Prostate gland (tissue), 2 donors: ENCODE measurements at regions of chr3 and their contacts with region 1.

Region 1: DNA sequence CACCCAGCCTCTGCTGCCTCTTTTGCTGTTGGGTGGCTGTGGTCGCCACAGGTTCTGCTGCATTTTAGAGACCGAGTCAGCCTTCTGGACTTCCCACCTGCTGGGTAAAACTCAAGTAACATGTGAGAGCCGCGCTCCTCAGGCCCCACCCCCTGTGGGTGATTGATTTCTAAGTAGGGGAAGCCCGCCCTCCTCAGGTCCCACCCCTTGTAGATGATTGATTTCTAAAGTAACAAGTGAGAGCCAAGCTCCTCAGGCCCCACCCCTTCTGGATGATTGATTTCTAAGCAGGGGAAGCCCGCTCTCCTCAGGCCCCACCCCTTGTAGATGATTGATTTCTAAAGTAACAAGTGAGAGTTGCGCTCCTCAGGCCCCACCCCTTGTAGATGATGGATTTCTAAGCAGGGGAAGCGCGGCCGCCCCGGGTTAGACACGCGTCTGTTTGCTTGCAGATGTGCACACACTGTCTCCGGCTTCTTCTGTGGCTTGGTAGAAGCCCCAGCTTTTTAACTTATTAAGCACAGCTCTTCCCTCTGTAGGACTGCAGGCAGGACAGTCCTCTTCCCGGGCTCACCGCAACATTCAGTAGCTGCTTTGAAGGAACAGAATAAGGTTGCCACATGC is 83.4 kb downstream of the FAM43A start:
- DNase-seq: peak; percentile 94
- H3K4me3 ChIP-seq: peak overlapping the region; percentile 20 to 22
- H3K27ac ChIP-seq: peak overlapping the region in 1 of 2 donors; percentile 17
- H3K4me1 ChIP-seq: peaks cover 2% of the 10 kb centered on the region
- H3K27me3 ChIP-seq: no peaks in the 10 kb centered on the region
- CTCF ChIP-seq: peak in 2 of 4 experiments; percentile 6 to 10
- POLR2A ChIP-seq: peak; percentile 12

Region 2: GRCh38 chr3:194871143-194871863 is 102.2 kb after region 1 on chr3:
- intact Hi-C with region 1: loop called (anchors 10 kb)
- DNase-seq: peak; percentile 94
- H3K4me3 ChIP-seq: no peak overlapping the region
- H3K27ac ChIP-seq: peak overlapping the region; percentile 71 to 76
- H3K4me1 ChIP-seq: peaks cover 32% of the 10 kb centered on the region
- H3K27me3 ChIP-seq: no peaks in the 10 kb centered on the region
- CTCF ChIP-seq: no peak
- POLR2A ChIP-seq: no peak

Region 3: GRCh38 chr3:195106418-195106906 is 337.3 kb after region 1 on chr3:
- intact Hi-C with region 1: loop called (anchors 10 kb)
- DNase-seq: peak; percentile 39
- H3K4me3 ChIP-seq: no peak overlapping the region
- H3K27ac ChIP-seq: no peak overlapping the region
- H3K4me1 ChIP-seq: peaks cover 5% of the 10 kb centered on the region
- H3K27me3 ChIP-seq: no peaks in the 10 kb centered on the region
- CTCF ChIP-seq: peak; percentile 98 to 100 (median 100)
- POLR2A ChIP-seq: no peak

Region 4: DNA sequence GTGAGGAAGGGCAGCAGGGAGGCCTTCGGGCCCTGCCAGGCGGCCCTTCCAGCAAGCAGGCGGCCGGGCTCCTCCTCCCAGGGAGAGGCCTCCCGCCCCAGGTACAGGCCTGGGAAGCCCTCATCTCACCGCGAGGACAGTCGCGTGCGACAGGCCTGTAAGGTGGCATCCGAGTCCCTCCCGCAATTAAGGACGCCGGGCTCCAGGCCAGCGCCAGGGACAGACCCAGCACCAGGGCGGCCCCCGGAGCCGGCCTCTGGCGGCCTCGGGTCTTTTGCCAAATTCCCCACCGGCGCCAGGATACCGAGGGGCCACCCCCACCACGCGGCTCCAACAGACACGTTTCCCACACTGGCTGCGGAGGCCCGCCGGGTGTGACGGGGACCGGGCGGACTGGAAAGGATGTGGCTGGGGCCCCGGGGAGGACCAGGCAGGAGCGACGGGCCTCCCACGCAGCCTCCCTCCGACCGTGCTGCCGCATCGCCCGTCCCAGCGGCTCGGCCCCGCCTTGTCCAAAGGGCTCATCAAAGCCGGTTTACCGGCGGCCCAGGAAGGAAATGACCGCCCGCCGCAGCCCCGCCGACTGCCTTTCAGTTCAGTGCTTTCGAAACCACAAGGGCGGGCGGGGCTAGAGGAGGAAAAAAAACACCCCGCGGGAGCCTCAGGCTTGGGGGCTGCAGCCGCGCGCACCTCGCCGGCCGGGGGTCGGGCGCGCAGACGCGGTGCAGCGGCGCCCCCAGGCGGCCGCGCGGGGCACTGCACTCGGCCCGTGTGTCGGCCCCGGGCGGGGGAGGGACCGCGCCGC is 490.5 kb after region 1 on chr3:
- intact Hi-C with region 1: loop called (anchors 10 kb)
- DNase-seq: peak; percentile 85
- H3K4me3 ChIP-seq: peak overlapping the region; percentile 53 to 60
- H3K27ac ChIP-seq: peak overlapping the region; percentile 93 to 94
- H3K4me1 ChIP-seq: peaks cover 11% of the 10 kb centered on the region
- H3K27me3 ChIP-seq: no peaks in the 10 kb centered on the region
- CTCF ChIP-seq: peak; percentile 62 to 100 (median 90)
- POLR2A ChIP-seq: peak; percentile 47